Dendritic cell treated with granulocyte-macrophage colony-stimulating factor and Interleukin-4, amounts not matched to agents 40 ng/mL and 50 ng/mL, for 4 days (primary cell): ENCODE measurements at regions of chr10 and their contacts with region 1.

Region 1: DNA sequence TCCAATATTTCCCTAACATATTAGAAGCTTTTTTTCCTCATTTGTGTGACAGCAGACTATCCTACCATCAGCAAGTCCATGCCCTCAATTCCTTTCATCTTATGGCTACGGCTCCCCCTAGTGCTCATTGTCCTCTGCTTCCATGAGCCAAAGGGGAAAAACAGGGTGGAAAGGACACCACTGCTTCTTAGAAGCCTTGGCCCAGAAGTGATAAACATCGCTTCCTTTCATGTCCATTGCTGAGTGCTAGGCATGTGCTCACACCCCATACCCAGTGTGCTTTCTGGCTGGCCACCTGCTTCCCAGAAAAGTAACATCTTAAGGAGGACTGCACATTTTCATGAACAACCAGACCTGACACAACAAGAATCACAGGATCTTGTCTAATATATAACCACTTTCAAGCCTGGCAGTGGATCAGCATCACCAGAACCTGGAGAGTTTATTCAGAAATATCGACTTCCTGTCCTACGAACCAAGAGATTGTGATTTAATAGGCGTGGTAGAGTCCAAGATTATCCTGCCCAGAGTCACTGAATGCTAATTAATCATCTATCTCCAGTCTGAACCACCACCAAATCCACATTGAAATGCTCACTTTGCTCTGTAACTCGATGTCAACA is 650.5 kb upstream of the SORCS1 start:
- H3K4me3 Mint-ChIP-seq: no peak overlapping the region
- H3K27ac Mint-ChIP-seq: no peak overlapping the region
- H3K4me1 Mint-ChIP-seq: no peaks in the 10 kb centered on the region
- H3K27me3 Mint-ChIP-seq: no peaks in the 10 kb centered on the region

Region 2: DNA sequence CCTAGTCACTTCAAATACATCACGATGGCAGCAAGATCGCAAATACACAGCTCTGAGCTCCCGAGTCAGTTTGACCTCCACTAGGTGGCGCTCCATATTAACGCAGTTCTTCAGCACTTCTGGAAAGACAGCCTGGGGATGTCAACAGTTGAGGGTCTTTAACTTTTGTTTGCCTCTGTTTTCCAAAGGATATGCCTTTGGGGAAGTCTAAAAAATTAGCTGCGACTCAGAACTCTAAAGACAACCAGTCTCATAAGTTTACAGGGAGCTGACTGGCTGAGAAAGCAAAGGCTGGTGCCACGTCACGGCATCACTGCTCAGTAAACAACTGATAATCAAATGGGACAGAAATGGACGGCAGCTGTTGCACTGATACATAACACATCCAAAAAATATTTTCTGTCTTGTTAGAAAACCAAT is 1109.3 kb before region 1 on chr10:
- intact Hi-C with region 1: loop called (anchors 5 kb)
- H3K4me3 Mint-ChIP-seq: no peak overlapping the region
- H3K27ac Mint-ChIP-seq: no peak overlapping the region
- H3K4me1 Mint-ChIP-seq: no peaks in the 10 kb centered on the region
- H3K27me3 Mint-ChIP-seq: peaks cover 1% of the 10 kb centered on the region

Region 3: DNA sequence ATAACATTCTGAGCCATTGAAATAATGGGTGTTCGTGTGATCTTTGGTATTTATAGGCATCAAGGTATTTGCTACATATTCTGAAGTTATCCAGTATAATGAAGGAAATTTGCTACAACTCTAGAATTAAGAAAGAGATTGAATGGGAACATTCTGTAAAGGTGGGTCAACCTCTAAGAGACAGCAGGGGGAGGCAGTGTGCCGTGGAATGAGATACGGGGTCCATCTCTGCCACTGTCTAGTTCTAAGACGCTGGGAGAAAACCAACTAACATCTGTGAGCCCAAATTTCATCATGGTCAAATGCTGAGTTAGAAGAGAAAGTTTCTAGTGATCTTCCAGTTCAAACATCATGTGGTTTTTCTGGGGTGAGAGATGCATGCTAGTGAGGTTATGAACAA is 1019.4 kb before region 1 on chr10:
- intact Hi-C with region 1: loop called (anchors 5 kb)
- H3K4me3 Mint-ChIP-seq: no peak overlapping the region
- H3K27ac Mint-ChIP-seq: no peak overlapping the region
- H3K4me1 Mint-ChIP-seq: peaks cover 9% of the 10 kb centered on the region
- H3K27me3 Mint-ChIP-seq: peaks cover 4% of the 10 kb centered on the region

Region 4: GRCh38 chr10:107409522-107409921 is 405.5 kb before region 1 on chr10:
- intact Hi-C with region 1: loop called (anchors 1 kb)
- H3K4me3 Mint-ChIP-seq: no peak overlapping the region
- H3K27ac Mint-ChIP-seq: no peak overlapping the region
- H3K4me1 Mint-ChIP-seq: no peaks in the 10 kb centered on the region
- H3K27me3 Mint-ChIP-seq: no peaks in the 10 kb centered on the region